Aorta (tissue), 5 donors: ENCODE measurements at regions of chr21 and their contacts with region 1.

Region 1: DNA sequence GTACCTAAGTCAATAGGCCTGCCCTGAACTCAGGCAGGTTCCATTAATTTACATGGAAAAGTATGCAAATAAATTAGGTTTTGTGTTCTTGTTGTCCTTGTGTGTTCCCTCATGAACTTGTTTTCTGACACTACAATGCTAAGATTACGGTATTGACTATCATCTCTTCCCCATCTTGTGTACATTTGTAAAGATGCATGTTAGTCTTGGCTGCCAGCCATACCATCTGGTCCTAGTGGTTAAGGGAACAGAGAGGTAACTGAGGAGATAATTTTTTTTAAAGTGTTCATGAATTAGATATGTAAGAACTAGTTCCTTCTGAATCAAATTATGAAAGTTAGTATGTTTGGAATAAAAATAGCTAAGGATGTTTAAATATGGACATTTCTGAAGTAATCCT is 167.6 kb upstream of the ADAMTS5 start:
- DNase-seq: no peak
- ATAC-seq: no peak
- H3K4me3 ChIP-seq: no peak overlapping the region
- H3K27ac ChIP-seq: no peak overlapping the region
- H3K4me1 ChIP-seq: peaks cover 0 to 2% of the 10 kb centered on the region in 2 donors
- H3K27me3 ChIP-seq: no peaks in the 10 kb centered on the region

Region 2: DNA sequence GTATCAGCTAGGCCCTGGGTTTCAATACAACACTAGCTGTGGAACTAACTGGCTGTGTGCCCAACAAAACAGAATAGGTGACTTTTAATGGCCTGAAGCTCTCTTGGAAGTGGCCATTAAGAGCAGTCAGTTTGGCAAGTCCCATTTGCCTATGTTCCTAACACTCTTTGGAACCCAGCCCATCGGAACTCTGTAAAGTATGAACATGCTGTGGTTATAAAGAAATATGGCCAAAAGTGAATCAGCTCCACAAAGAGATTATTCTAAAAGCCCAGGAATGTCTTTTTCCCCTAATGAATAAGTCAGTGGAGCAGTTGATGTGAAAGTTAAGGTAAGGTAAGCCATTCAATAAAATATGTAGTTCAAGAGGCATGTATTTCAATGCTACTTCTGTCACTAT is 56.1 kb after region 1 on chr21:
- intact Hi-C with region 1: loop called in 1 of 2 experiments (anchors 10 kb)
- DNase-seq: no peak
- ATAC-seq: no peak
- H3K4me3 ChIP-seq: no peak overlapping the region
- H3K27ac ChIP-seq: no peak overlapping the region
- H3K4me1 ChIP-seq: no peaks in the 10 kb centered on the region
- H3K27me3 ChIP-seq: no peaks in the 10 kb centered on the region

Region 3: GRCh38 chr21:27371115-27371974 is 236.8 kb after region 1 on chr21:
- intact Hi-C with region 1: no loop called
- DNase-seq: no peak
- ATAC-seq: no peak
- H3K4me3 ChIP-seq: no peak overlapping the region
- H3K27ac ChIP-seq: no peak overlapping the region
- H3K4me1 ChIP-seq: peaks cover 0 to 3% of the 10 kb centered on the region in 2 donors
- H3K27me3 ChIP-seq: no peaks in the 10 kb centered on the region

Region 4: GRCh38 chr21:27505516-27505915 is 371.0 kb after region 1 on chr21:
- intact Hi-C with region 1: no loop called
- DNase-seq: no peak
- ATAC-seq: no peak
- H3K4me3 ChIP-seq: no peak overlapping the region
- H3K27ac ChIP-seq: no peak overlapping the region
- H3K4me1 ChIP-seq: no peaks in the 10 kb centered on the region
- H3K27me3 ChIP-seq: no peaks in the 10 kb centered on the region